ENCODE measurements at regions of chr3 and their contacts with region 1.

Region 1: GRCh38 chr3:47781685-47782445 is at the start of gene SMARCC1:
- DNase-seq: peak; percentile 99
- H3K4me3 Mint-ChIP-seq: peak within 1 kb of the TSS; percentile 93
- H3K27ac Mint-ChIP-seq: peak within 1 kb of the TSS; percentile 96
- H3K4me1 Mint-ChIP-seq: peaks cover 22% of the 10 kb centered on the region
- H3K27me3 Mint-ChIP-seq: no peaks in the 10 kb centered on the region
- total RNA-seq, gene SMARCC1: 83.0 to 83.7 TPM

Region 2: GRCh38 chr3:47762233-47762632 is 19.6 kb before region 1 on chr3:
- CTCF ChIA-PET with region 1: no interaction called
- POLR2A ChIA-PET with region 1: no interaction called
- DNase-seq: no peak
- H3K4me3 Mint-ChIP-seq: no peak overlapping the region
- H3K27ac Mint-ChIP-seq: peak overlapping the region; percentile 55
- H3K4me1 Mint-ChIP-seq: peaks cover 7% of the 10 kb centered on the region
- H3K27me3 Mint-ChIP-seq: no peaks in the 10 kb centered on the region

Region 3: GRCh38 chr3:47802734-47803477 is 21.0 kb after region 1 on chr3 and contains the start of gene DHX30:
- CTCF ChIA-PET with region 1: interaction called, 5 read pairs
- POLR2A ChIA-PET with region 1: interaction called, 12 read pairs
- DNase-seq: peak; percentile 86
- H3K4me3 Mint-ChIP-seq: peak within 1 kb of the TSS; percentile 93
- H3K27ac Mint-ChIP-seq: peak within 1 kb of the TSS; percentile 90
- H3K4me1 Mint-ChIP-seq: peaks cover 30% of the 10 kb centered on the region
- H3K27me3 Mint-ChIP-seq: peaks cover 2% of the 10 kb centered on the region
- total RNA-seq, gene DHX30: 62.0 to 63.0 TPM

Region 4: DNA sequence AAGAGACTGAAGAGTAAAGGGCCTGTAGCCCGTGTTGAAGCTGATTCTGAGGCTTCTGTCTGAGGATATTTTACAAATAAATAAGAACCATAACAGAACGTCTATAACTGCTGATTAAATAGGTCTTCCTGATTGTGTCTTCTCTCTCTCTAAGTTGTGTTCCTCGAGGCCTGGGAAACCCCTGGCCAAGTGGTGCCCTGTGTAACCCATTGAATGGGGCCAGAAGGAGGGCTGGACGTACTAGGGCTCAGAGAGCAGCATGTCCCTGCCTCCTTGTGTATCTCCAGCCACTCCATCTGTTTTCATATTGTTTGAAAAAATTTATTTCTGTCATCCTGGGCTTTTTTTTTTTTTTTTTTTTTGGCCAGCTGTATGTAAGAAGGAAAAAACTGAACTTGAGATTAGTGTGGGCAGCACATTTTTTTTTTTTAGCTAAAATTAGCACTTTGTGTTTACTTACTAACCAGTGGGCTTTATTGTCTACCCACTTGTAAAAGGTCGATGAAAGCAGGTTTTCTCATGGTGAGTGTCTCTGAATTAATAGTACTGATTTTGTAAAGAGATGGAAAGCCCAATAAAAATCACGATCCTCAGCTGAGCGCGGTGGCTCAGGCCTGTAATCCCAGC is 31.8 kb after region 1 on chr3:
- CTCF ChIA-PET with region 1: no interaction called
- POLR2A ChIA-PET with region 1: no interaction called
- DNase-seq: no peak
- H3K4me3 Mint-ChIP-seq: no peak overlapping the region
- H3K27ac Mint-ChIP-seq: no peak overlapping the region
- H3K4me1 Mint-ChIP-seq: no peaks in the 10 kb centered on the region
- H3K27me3 Mint-ChIP-seq: no peaks in the 10 kb centered on the region

Region 5: GRCh38 chr3:47882338-47882737 is 100.5 kb after region 1 on chr3:
- CTCF ChIA-PET with region 1: no interaction called
- POLR2A ChIA-PET with region 1: no interaction called
- DNase-seq: no peak
- H3K4me3 Mint-ChIP-seq: no peak overlapping the region
- H3K27ac Mint-ChIP-seq: no peak overlapping the region
- H3K4me1 Mint-ChIP-seq: peaks cover 13% of the 10 kb centered on the region
- H3K27me3 Mint-ChIP-seq: no peaks in the 10 kb centered on the region

Measured in activated CD4-positive, alpha-beta memory T cell treated with anti-CD3 and anti-CD28 coated beads, Interleukin-2, amount 10 ng/mL, durations not matched to agents 7 days and 5 days (primary cell).